HepG2 (cell line): ENCODE measurements at regions of chr6 and their contacts with region 1.

Region 1: GRCh38 chr6:155493694-155494143 is 38.1 kb upstream of the NOX3 start:
- DNase-seq: peak; percentile 91
- ATAC-seq: peak; percentile 20; the same call in 2 of the 3 replicates
- H3K4me3 ChIP-seq: no peak overlapping the region
- H3K27ac ChIP-seq: peak overlapping the region; percentile 76
- H3K4me1 ChIP-seq: peaks cover 92% of the 10 kb centered on the region
- H3K27me3 ChIP-seq: no peaks in the 10 kb centered on the region
- CTCF ChIP-seq: no peak
- EP300 ChIP-seq: peak in 1 of 2 experiments; percentile 92; a peak in 2 of 4 replicates
- POLR2A ChIP-seq: no peak
- RAD21 ChIP-seq: no peak

Region 2: GRCh38 chr6:155418017-155418761 is 75.5 kb before region 1 on chr6:
- CTCF ChIA-PET with region 1: no interaction called
- POLR2A ChIA-PET with region 1: no interaction called
- in situ Hi-C with region 1: no loop called
- intact Hi-C with region 1: no loop called
- DNase-seq: no peak
- ATAC-seq: no peak
- H3K4me3 ChIP-seq: no peak overlapping the region
- H3K27ac ChIP-seq: no peak overlapping the region
- H3K4me1 ChIP-seq: peaks cover 55% of the 10 kb centered on the region
- H3K27me3 ChIP-seq: no peaks in the 10 kb centered on the region
- CTCF ChIP-seq: no peak
- EP300 ChIP-seq: no peak
- POLR2A ChIP-seq: no peak
- RAD21 ChIP-seq: no peak

Region 3: DNA sequence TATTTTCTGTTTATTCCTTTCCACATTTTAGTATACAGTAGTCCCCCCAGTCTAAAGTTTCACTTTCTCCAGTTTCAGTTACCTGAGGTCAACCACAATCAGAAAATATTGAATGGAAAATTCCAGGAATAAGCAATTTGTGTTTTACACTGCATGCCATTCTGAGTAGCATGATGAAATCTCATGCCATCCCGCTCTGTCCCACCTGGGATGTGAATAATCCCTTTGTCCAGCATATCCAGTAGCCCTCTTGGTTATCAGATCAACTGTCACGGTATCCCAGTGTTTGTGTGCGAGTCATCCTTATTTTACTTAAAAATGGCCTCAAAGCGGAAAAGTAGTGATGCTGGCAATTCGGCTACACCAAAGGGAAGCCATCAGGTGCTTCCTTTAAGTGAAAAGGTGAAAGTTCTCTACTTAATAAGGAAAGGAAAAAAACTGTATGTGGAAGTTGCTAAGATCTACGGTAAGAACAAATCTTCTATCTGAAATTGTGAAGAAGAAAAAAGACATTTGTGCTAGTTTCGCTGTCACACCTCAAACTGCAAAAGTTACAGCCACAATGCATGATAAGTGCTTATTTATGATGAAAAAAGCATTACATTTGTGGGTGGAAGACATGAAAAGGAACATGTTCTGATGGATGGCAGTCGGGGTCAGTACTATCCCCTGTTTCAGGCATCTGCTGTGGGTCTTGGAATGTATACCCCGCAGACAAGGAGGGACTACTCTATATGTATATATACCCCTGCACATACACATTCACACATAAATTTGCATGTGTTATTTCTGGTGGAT is 49.4 kb before region 1 on chr6:
- CTCF ChIA-PET with region 1: no interaction called
- POLR2A ChIA-PET with region 1: interaction called, 3 read pairs
- in situ Hi-C with region 1: loop called (anchors 5 kb)
- intact Hi-C with region 1: loop called (anchors 2 kb)
- DNase-seq: peak; percentile 100
- ATAC-seq: peak; percentile 100
- H3K4me3 ChIP-seq: peak overlapping the region in 1 of 3 experiments; percentile 28; a peak in 1 of 6 replicates
- H3K27ac ChIP-seq: peak overlapping the region; percentile 96
- H3K4me1 ChIP-seq: peaks cover 78% of the 10 kb centered on the region
- H3K27me3 ChIP-seq: no peaks in the 10 kb centered on the region
- CTCF ChIP-seq: no peak
- EP300 ChIP-seq: peak; percentile 99
- POLR2A ChIP-seq: peak in 1 of 2 experiments; percentile 59; a peak in 2 of 4 replicates
- RAD21 ChIP-seq: peak; percentile 37